WTC11 (cell line): ENCODE measurements at regions of chr7 and their contacts with region 1.

Region 1: GRCh38 chr7:138738551-138739335 is 37.6 kb upstream of the SVOPL start:
- DNase-seq: peak; percentile 85
- ATAC-seq: peak; percentile 93
- H3K4me3 Mint-ChIP-seq: no peak overlapping the region
- H3K27ac Mint-ChIP-seq: no peak overlapping the region
- H3K4me1 Mint-ChIP-seq: peaks cover 24% of the 10 kb centered on the region
- H3K27me3 Mint-ChIP-seq: no peaks in the 10 kb centered on the region
- CTCF ChIP-seq: peak; percentile 87

Region 2: GRCh38 chr7:138161600-138162081 is 577.1 kb before region 1 on chr7:
- CTCF ChIA-PET with region 1: interaction called, 15 read pairs
- POLR2A ChIA-PET with region 1: no interaction called
- DNase-seq: peak; percentile 84
- ATAC-seq: peak; percentile 99
- H3K4me3 Mint-ChIP-seq: no peak overlapping the region
- H3K27ac Mint-ChIP-seq: no peak overlapping the region
- H3K4me1 Mint-ChIP-seq: peaks cover 10% of the 10 kb centered on the region
- H3K27me3 Mint-ChIP-seq: peaks cover 11% of the 10 kb centered on the region
- CTCF ChIP-seq: 0 out of 2 replicates have a peak, but pooled peaks have one; percentile 29

Region 3: GRCh38 chr7:138645290-138645689 is 93.5 kb before region 1 on chr7:
- CTCF ChIA-PET with region 1: interaction called, 20 read pairs
- POLR2A ChIA-PET with region 1: no interaction called
- DNase-seq: peak; percentile 47
- ATAC-seq: peak; percentile 81
- H3K4me3 Mint-ChIP-seq: no peak overlapping the region
- H3K27ac Mint-ChIP-seq: no peak overlapping the region
- H3K4me1 Mint-ChIP-seq: peaks cover 12% of the 10 kb centered on the region
- H3K27me3 Mint-ChIP-seq: no peaks in the 10 kb centered on the region
- CTCF ChIP-seq: no peak

Region 4: GRCh38 chr7:138663725-138664710 is 74.7 kb before region 1 on chr7:
- CTCF ChIA-PET with region 1: interaction called, 13 read pairs
- POLR2A ChIA-PET with region 1: no interaction called
- DNase-seq: peak; percentile 44
- ATAC-seq: peak; percentile 48
- H3K4me3 Mint-ChIP-seq: peak overlapping the region; percentile 78
- H3K27ac Mint-ChIP-seq: peak overlapping the region; percentile 95
- H3K4me1 Mint-ChIP-seq: peaks cover 84% of the 10 kb centered on the region
- H3K27me3 Mint-ChIP-seq: no peaks in the 10 kb centered on the region; the same call in 1 of the 2 replicates
- CTCF ChIP-seq: no peak

Region 5: GRCh38 chr7:138755327-138755747 is 16.6 kb after region 1 on chr7:
- CTCF ChIA-PET with region 1: interaction called, 13 read pairs
- POLR2A ChIA-PET with region 1: no interaction called
- DNase-seq: peak; percentile 26
- ATAC-seq: peak; percentile 61
- H3K4me3 Mint-ChIP-seq: no peak overlapping the region
- H3K27ac Mint-ChIP-seq: no peak overlapping the region
- H3K4me1 Mint-ChIP-seq: peaks cover 35% of the 10 kb centered on the region
- H3K27me3 Mint-ChIP-seq: no peaks in the 10 kb centered on the region
- CTCF ChIP-seq: no peak

Region 6: DNA sequence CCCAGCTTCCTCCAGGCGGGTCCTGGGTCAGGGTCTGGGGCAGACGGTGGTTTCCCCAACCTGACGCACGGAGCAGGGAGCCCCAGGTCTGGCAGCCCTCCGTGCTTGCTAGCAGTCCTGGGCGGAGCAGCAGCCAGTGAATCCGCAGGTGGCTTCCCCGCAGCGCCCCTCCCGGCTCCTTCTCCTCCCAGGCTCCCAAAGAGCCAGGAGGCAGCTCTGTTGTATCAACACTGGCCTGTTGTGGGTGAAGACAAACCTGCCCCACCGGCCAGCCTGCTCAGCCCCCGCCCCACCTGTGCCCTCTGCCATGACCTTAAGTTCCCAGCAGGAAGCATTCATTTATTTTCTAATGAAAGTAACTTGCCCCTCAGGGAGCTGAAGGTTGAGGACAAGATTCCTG is 35.1 kb after region 1 on chr7:
- CTCF ChIA-PET with region 1: interaction called, 10 read pairs
- POLR2A ChIA-PET with region 1: no interaction called
- DNase-seq: peak; percentile 77
- ATAC-seq: peak; percentile 95
- H3K4me3 Mint-ChIP-seq: no peak overlapping the region
- H3K27ac Mint-ChIP-seq: no peak overlapping the region
- H3K4me1 Mint-ChIP-seq: peaks cover 27% of the 10 kb centered on the region
- H3K27me3 Mint-ChIP-seq: peaks cover 7% of the 10 kb centered on the region
- CTCF ChIP-seq: no peak

Region 7: GRCh38 chr7:138797841-138798271 is 59.1 kb after region 1 on chr7 and contains the starts of genes ATP6V0A4 and TMEM213:
- CTCF ChIA-PET with region 1: interaction called, 24 read pairs
- POLR2A ChIA-PET with region 1: no interaction called
- DNase-seq: peak; percentile 72
- ATAC-seq: peak; percentile 96
- H3K4me3 Mint-ChIP-seq: peak within 1 kb of the TSS; percentile 57
- H3K27ac Mint-ChIP-seq: peak within 1 kb of the TSS; percentile 55
- H3K4me1 Mint-ChIP-seq: peaks cover 45% of the 10 kb centered on the region
- H3K27me3 Mint-ChIP-seq: no peaks in the 10 kb centered on the region
- CTCF ChIP-seq: no peak
- total RNA-seq, gene ATP6V0A4: 1.1 to 2.0 TPM (median 1.3 TPM) in 3 replicates
- total RNA-seq, gene TMEM213: 0.11 to 0.18 TPM (median 0.11 TPM) in 3 replicates